Naive thymus-derived CD4-positive, alpha-beta T cell (primary cell): ENCODE measurements at regions of chr1 and their contacts with region 1.

Region 1: DNA sequence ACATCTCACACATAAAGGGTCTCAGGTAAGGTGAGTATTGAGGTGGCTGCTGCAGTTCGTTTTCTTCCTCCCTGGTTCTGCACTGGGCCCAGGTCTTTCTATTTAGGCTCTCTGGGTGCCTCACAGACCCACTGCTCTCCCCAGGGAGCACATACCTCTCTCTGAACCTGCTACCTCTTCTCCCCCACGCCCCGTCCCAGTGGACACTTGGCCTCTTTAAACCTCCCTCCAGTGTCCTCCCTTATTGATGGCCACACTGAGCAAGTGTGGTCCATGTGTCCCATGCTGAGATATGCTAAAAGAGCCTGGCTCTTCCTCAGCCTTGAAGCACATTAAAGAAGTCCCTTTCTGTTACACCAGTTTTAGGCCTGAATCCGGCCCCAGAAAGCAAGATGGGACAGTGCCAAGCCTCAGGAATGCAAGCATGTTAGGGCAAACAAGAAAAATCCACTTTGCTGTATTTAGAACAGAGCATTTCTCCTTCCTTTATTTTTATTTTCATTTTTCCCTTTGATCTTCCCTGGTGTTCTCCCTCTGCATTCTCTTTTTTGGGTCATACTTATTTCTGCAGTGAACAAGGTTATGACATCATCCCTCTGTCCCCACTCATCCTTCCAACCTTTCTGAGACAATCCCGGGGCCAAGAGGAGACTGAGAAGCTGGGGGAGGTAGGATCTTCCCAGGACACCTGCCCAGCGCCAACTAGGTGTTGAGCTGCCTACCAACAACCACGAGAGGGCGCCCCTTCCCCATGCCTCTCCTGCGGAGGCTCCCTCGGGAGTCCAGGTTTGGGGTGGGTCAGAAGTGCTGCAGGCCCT is 5.0 kb upstream of the CHI3L2 start:
- DNase-seq: peak in 8 of 9 donors; percentile 51 to 83 (median 62)
- ATAC-seq: peak; percentile 62
- H3K4me3 ChIP-seq: peak overlapping the region; percentile 55
- H3K4me3 Mint-ChIP-seq: peak overlapping the region; percentile 77 to 92 (median 84)
- H3K27ac ChIP-seq: peak overlapping the region; percentile 77
- H3K27ac Mint-ChIP-seq: peak overlapping the region; percentile 85 to 100 (median 97)
- H3K4me1 ChIP-seq: peaks cover 92% of the 10 kb centered on the region in 2 donors
- H3K4me1 Mint-ChIP-seq: peaks cover 78 to 100% (median 97%) of the 10 kb centered on the region in 7 donors
- H3K27me3 ChIP-seq: no peaks in the 10 kb centered on the region
- H3K27me3 Mint-ChIP-seq: no peaks in the 10 kb centered on the region

Region 2: DNA sequence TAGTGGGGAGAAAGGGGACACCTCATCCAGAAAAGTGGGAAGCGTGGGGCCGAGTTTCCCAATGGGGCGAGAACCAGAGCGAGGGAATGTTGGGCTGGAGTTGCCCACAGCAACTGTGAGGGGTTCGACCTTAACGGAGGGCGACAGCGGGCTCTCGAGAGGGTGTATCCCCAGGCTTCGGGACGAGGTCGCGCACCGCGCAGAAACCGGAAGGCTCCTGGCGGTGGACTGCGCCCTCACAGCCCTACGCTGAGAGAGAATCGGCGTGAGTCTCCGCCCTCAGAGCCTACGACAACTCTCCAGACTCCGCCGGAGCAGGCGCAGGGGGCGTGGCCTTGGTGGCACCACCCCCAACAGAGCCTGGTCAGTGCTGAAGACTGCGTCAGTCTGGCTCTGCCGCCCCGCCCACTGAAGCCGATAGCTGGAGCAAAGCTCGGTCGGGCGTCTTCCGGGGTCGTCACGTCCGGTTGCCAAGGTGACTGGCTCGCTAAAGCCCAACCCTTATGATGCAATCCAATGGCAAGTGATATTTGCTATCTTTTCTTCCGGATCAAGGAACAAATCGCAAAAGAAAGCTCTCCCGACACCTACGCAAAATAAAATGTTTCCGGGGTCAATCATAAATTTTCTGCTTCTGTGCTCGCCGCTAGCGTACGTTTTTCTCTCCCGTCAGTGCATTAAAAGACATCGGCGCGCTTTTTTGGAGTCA is 258.7 kb before region 1 on chr1 and contains the start of gene LRIF1:
- CTCF ChIA-PET with region 1: no interaction called
- POLR2A ChIA-PET with region 1: interaction called, 3 read pairs
- intact Hi-C with region 1: loop called (anchors 5 kb)
- DNase-seq: peak; percentile 96 to 100 (median 100)
- ATAC-seq: peak; percentile 98
- H3K4me3 ChIP-seq: peak within 1 kb of the TSS; percentile 90
- H3K4me3 Mint-ChIP-seq: peak within 1 kb of the TSS; percentile 81 to 98 (median 93)
- H3K27ac ChIP-seq: peak within 1 kb of the TSS; percentile 89
- H3K27ac Mint-ChIP-seq: peak within 1 kb of the TSS; percentile 89 to 99 (median 97)
- H3K4me1 ChIP-seq: peaks cover 25% of the 10 kb centered on the region in 2 donors
- H3K4me1 Mint-ChIP-seq: peaks cover 29 to 50% (median 35%) of the 10 kb centered on the region in 7 donors
- H3K27me3 ChIP-seq: peaks cover 0 to under 1% of the 10 kb centered on the region in 2 donors
- H3K27me3 Mint-ChIP-seq: peaks cover 12 to 19% (median 15%) of the 10 kb centered on the region in 5 donors
- total RNA-seq, gene LRIF1: 7.9 to 25.8 (median 17.3) TPM

Region 3: DNA sequence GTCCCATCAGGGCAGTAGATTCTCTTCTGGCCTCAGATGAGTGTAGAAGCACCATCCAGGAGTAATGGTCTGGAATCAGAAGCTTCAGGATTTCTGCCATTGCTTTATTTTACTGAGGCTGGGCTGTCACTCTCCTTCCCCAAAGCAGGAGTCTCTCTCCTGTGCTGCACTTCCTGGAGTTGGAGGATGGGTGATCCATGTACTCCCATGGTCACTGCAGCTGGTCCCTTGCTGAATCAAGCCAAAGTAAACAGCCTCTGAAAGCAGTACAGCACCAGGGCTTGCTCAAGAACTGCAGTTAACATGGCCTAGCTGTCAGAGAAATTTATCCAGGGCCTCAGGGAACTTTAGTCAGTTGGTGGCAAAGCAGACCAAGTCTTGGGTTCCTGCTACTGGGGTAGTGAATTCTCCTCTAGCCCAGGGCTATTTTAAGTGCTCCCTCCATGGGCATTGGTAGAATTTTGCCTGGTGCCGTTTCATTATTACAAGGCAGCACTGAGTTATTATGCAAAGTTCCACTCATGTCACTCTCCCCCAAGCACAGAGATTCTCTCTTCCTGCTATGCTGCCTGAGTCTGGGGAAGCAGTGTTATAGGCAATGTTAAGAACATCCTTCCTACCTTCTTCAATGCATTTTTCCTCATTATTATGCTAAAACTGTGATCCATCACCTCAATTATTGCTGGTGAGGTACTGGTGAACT is 112.2 kb before region 1 on chr1:
- CTCF ChIA-PET with region 1: no interaction called
- POLR2A ChIA-PET with region 1: no interaction called
- intact Hi-C with region 1: no loop called
- DNase-seq: no peak
- ATAC-seq: no peak
- H3K4me3 ChIP-seq: no peak overlapping the region
- H3K4me3 Mint-ChIP-seq: no peak overlapping the region
- H3K27ac ChIP-seq: no peak overlapping the region
- H3K27ac Mint-ChIP-seq: no peak overlapping the region
- H3K4me1 ChIP-seq: no peaks in the 10 kb centered on the region
- H3K4me1 Mint-ChIP-seq: no peaks in the 10 kb centered on the region
- H3K27me3 ChIP-seq: no peaks in the 10 kb centered on the region
- H3K27me3 Mint-ChIP-seq: peaks cover 0 to 5% (median 0%) of the 10 kb centered on the region in 5 donors

Region 4: DNA sequence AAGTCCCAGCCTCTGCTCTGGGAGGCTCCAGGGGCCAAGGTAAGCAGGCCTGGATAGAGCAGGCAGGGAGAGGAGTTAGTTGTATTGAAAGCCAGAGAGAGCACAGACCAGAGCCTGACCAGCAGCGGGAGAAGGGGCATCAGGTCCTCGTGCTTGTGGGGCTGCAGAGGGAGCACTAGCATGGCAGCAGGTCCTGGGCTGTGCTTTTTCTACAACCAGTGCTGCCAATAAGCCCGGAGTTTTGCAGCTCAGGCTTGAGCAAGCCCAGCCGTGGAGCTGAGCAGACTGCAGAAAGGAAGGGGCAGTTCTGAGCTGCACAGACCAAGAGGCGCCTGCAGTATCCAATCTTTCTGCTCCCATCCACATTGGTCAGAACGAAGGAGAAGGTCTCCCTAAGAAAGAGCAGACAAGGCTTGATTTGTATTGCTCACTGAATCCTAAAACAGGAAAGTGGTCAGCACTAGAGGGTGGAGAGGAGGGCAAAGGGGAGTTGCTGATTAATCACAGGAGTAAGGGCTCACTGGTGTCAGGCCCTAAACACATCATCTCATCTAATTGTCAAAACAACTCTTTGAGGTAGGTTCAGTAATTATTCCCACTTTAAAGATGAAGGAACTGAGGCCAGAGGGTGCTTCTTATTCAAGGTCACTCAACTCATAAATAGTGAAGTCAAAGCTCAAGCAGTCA is 24.8 kb before region 1 on chr1:
- CTCF ChIA-PET with region 1: interaction called, 341 read pairs
- POLR2A ChIA-PET with region 1: interaction called, 1,128 read pairs
- intact Hi-C with region 1: loop called (anchors 1 kb)
- DNase-seq: peak in 7 of 9 donors; percentile 57 to 84 (median 78)
- ATAC-seq: peak; percentile 61
- H3K4me3 ChIP-seq: peak overlapping the region; percentile 84
- H3K4me3 Mint-ChIP-seq: peak overlapping the region; percentile 90 to 100 (median 99)
- H3K27ac ChIP-seq: peak overlapping the region; percentile 90
- H3K27ac Mint-ChIP-seq: peak overlapping the region; percentile 92 to 99 (median 96)
- H3K4me1 ChIP-seq: peaks cover 57 to 66% of the 10 kb centered on the region in 2 donors
- H3K4me1 Mint-ChIP-seq: peaks cover 47 to 75% (median 66%) of the 10 kb centered on the region in 7 donors
- H3K27me3 ChIP-seq: no peaks in the 10 kb centered on the region
- H3K27me3 Mint-ChIP-seq: no peaks in the 10 kb centered on the region

Region 5: DNA sequence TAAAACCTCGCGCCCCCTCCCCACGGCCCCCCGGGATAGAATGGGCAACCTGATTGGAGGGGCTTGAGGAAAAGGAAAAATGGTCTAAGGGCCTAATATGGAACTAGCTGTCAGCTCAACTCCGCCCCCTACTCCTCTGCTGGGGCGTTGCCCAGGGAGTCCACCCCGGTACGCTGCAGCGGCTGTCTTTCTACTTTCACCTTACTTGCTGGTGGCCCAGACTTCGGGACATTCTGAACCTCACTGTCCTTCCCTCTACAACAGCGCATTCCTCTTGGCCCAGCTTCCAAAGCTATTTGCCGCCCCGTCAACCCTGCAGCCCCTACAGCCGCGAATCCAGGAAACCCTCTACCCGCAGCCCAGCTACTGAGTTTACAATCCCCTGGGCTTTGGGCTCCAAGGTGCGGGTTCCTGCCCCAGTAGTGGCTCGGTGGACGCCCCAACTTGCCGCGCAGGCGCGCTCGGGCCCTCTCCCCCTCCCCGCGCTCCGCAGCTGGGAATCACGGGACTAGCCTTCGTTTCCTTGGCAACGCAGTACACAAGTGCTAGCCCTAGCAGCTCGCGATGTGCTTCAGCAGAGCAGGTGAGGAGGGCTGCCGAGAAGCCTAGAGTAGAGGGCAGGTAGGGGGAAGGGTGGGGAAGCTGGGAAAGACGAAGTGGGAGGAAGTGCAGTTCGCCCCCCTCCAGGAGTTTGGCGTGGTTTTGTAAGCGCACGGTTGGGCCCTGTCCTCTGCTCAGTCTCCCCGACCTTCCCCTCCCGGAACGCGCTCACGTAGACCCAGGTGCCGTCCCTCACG is 123.8 kb after region 1 on chr1:
- CTCF ChIA-PET with region 1: interaction called, 3 read pairs
- POLR2A ChIA-PET with region 1: interaction called, 4 read pairs
- intact Hi-C with region 1: loop called (anchors 5 kb)
- DNase-seq: peak; percentile 74 to 94 (median 92)
- ATAC-seq: peak; percentile 94
- H3K4me3 ChIP-seq: peak overlapping the region; percentile 90
- H3K4me3 Mint-ChIP-seq: peak overlapping the region; percentile 85 to 97 (median 92)
- H3K27ac ChIP-seq: peak overlapping the region; percentile 61
- H3K27ac Mint-ChIP-seq: peak overlapping the region; percentile 38 to 97 (median 90)
- H3K4me1 ChIP-seq: peaks cover 5 to 9% of the 10 kb centered on the region in 2 donors
- H3K4me1 Mint-ChIP-seq: peaks cover 13 to 26% (median 19%) of the 10 kb centered on the region in 7 donors
- H3K27me3 ChIP-seq: no peaks in the 10 kb centered on the region
- H3K27me3 Mint-ChIP-seq: peaks cover 0 to 19% (median 0%) of the 10 kb centered on the region in 5 donors

Region 6: GRCh38 chr1:111481387-111482221 is 259.1 kb after region 1 on chr1:
- CTCF ChIA-PET with region 1: no interaction called
- POLR2A ChIA-PET with region 1: no interaction called
- intact Hi-C with region 1: loop called in 1 of 2 experiments (anchors 10 kb)
- DNase-seq: peak; percentile 23 to 65 (median 54)
- ATAC-seq: peak; percentile 80
- H3K4me3 ChIP-seq: no peak overlapping the region
- H3K4me3 Mint-ChIP-seq: peak overlapping the region in 1 of 10 donors; percentile 20
- H3K27ac ChIP-seq: no peak overlapping the region
- H3K27ac Mint-ChIP-seq: peak overlapping the region in 4 of 9 donors; percentile 22 to 86 (median 56)
- H3K4me1 ChIP-seq: peaks cover 22 to 25% of the 10 kb centered on the region in 2 donors
- H3K4me1 Mint-ChIP-seq: peaks cover 32 to 68% (median 53%) of the 10 kb centered on the region in 7 donors
- H3K27me3 ChIP-seq: no peaks in the 10 kb centered on the region
- H3K27me3 Mint-ChIP-seq: peaks cover 0 to 25% (median 0%) of the 10 kb centered on the region in 5 donors

Region 7: DNA sequence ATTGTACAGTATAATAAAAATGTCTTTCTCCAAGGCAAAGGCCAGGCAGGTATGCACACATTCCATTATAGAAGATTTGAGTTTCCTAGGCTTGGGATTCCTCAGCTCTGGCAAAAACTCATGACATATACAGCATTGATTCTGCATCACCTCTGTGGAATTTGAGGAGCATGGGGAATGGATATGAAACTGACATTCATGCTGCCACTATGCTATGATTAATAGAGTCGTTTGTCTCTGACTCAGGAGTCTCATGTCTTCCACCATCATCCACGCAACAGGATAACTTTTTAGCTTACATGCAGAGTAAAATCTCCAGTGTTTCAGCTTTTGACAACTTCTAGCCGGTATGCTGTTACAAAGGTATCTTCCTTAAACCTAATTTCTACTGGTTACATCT is 330.7 kb after region 1 on chr1:
- CTCF ChIA-PET with region 1: no interaction called
- POLR2A ChIA-PET with region 1: no interaction called
- intact Hi-C with region 1: no loop called
- DNase-seq: no peak
- ATAC-seq: no peak
- H3K4me3 ChIP-seq: no peak overlapping the region
- H3K4me3 Mint-ChIP-seq: no peak overlapping the region
- H3K27ac ChIP-seq: no peak overlapping the region
- H3K27ac Mint-ChIP-seq: no peak overlapping the region
- H3K4me1 ChIP-seq: no peaks in the 10 kb centered on the region
- H3K4me1 Mint-ChIP-seq: peaks cover 0 to 8% (median 4%) of the 10 kb centered on the region in 7 donors
- H3K27me3 ChIP-seq: no peaks in the 10 kb centered on the region
- H3K27me3 Mint-ChIP-seq: peaks cover 0 to 12% (median 3%) of the 10 kb centered on the region in 5 donors